Activated CD4-positive, alpha-beta T cell treated with anti-CD3 and anti-CD28 coated beads, Interleukin-2, amount 10 ng/mL, durations not matched to agents 7 days and 5 days (primary cell): ENCODE measurements at regions of chr15 and their contacts with region 1.

Region 1: DNA sequence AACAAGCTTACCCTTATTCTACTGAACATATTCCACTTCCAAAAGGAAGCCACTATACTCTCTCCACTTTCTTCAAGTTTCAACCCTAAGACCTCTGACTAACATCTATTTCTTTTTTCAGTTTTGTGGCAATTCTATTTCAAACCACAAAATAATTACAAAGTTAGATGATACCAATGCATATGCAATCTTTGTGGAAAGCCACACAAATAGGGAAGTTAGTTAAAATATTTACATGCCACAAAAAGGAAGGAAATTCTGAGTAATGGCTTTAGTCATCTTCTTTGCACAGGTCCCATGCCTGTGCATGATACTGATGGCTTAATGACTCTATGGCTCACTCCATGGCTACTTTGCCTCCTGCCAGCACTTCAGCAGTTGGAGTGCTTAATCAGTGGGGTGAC is 57.0 kb upstream of the MCTP2 start:
- DNase-seq: no peak
- H3K4me3 Mint-ChIP-seq: no peak overlapping the region
- H3K27ac Mint-ChIP-seq: no peak overlapping the region
- H3K4me1 Mint-ChIP-seq: peaks cover 23% of the 10 kb centered on the region
- H3K27me3 Mint-ChIP-seq: peaks cover 10% of the 10 kb centered on the region

Region 2: DNA sequence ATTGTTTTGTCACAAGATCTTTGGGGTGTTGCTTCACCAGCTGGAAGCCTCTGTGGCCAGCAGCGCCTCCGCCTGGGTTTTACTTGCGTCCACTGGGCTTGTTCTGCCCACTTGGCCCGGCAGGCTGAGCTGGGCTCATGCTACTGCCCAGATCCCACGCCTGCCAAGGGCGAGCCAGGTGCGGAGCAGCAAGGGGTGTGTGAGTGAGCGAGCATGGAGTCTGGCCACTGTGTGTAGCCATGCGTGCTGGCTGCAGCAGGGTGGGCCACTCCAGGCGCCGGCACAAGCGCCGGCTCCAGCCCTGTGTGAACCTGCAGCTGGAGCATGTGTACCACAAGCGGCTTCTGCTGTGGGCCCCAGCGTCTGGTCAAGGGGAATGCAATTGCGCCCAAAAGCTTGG is 668.9 kb before region 1 on chr15:
- CTCF ChIA-PET with region 1: no interaction called
- POLR2A ChIA-PET with region 1: no interaction called
- DNase-seq: no peak
- H3K4me3 Mint-ChIP-seq: no peak overlapping the region
- H3K27ac Mint-ChIP-seq: no peak overlapping the region
- H3K4me1 Mint-ChIP-seq: no peaks in the 10 kb centered on the region
- H3K27me3 Mint-ChIP-seq: no peaks in the 10 kb centered on the region

Region 3: GRCh38 chr15:94163999-94164807 is 10.2 kb before region 1 on chr15:
- CTCF ChIA-PET with region 1: interaction called, 10 read pairs
- POLR2A ChIA-PET with region 1: no interaction called
- DNase-seq: peak; percentile 66
- H3K4me3 Mint-ChIP-seq: no peak overlapping the region
- H3K27ac Mint-ChIP-seq: no peak overlapping the region
- H3K4me1 Mint-ChIP-seq: no peaks in the 10 kb centered on the region
- H3K27me3 Mint-ChIP-seq: peaks cover 9% of the 10 kb centered on the region

Region 4: DNA sequence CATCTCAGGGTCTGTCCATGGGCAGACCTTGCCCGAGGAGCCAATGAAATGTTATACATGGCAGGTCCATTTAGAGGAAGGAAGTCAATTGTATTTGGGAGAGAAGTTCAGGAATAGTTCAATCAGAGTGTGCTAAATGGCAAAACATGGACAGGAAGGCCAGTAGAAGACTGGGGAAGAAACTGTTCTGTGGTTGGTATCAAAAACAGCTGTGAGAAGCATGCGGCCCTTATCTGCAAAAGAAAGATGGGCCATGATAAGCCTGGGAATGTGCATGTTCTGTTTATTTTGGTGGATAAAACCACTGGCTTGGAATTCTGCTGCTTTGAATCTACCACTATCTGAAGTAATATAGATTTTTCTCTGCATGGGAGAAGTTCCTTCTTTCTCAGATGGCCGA is 157.3 kb after region 1 on chr15:
- CTCF ChIA-PET with region 1: no interaction called
- POLR2A ChIA-PET with region 1: no interaction called
- DNase-seq: no peak
- H3K4me3 Mint-ChIP-seq: no peak overlapping the region
- H3K27ac Mint-ChIP-seq: no peak overlapping the region
- H3K4me1 Mint-ChIP-seq: peaks cover 1% of the 10 kb centered on the region
- H3K27me3 Mint-ChIP-seq: no peaks in the 10 kb centered on the region